B cell (primary cell): ENCODE measurements at regions of chr12 and their contacts with region 1.

Region 1: GRCh38 chr12:6062757-6063735 is 61.4 kb downstream of the VWF start:
- DNase-seq: peak; percentile 69
- ATAC-seq: peak; percentile 78
- H3K4me3 ChIP-seq: no peak overlapping the region
- H3K4me3 Mint-ChIP-seq: no peak overlapping the region
- H3K27ac ChIP-seq: no peak overlapping the region
- H3K27ac Mint-ChIP-seq: no peak overlapping the region
- H3K4me1 ChIP-seq: no peaks in the 10 kb centered on the region
- H3K4me1 Mint-ChIP-seq: no peaks in the 10 kb centered on the region
- H3K27me3 ChIP-seq: peaks cover 0 to 10% (median 1%) of the 10 kb centered on the region in 4 experiments
- H3K27me3 Mint-ChIP-seq: peaks cover 30% of the 10 kb centered on the region
- CTCF ChIP-seq: peak; percentile 83

Region 2: GRCh38 chr12:5861416-5861815 is 201.6 kb before region 1 on chr12:
- CTCF ChIA-PET with region 1: no interaction called
- POLR2A ChIA-PET with region 1: no interaction called
- intact Hi-C with region 1: no loop called
- DNase-seq: no peak
- ATAC-seq: no peak
- H3K4me3 ChIP-seq: no peak overlapping the region
- H3K4me3 Mint-ChIP-seq: no peak overlapping the region
- H3K27ac ChIP-seq: no peak overlapping the region
- H3K27ac Mint-ChIP-seq: no peak overlapping the region
- H3K4me1 ChIP-seq: no peaks in the 10 kb centered on the region
- H3K4me1 Mint-ChIP-seq: no peaks in the 10 kb centered on the region
- H3K27me3 ChIP-seq: peaks cover 0 to 2% (median 0%) of the 10 kb centered on the region in 4 experiments
- H3K27me3 Mint-ChIP-seq: peaks cover 9% of the 10 kb centered on the region
- CTCF ChIP-seq: no peak

Region 3: GRCh38 chr12:6285063-6285477 is 222.0 kb after region 1 on chr12:
- CTCF ChIA-PET with region 1: interaction called, 4 read pairs
- POLR2A ChIA-PET with region 1: no interaction called
- intact Hi-C with region 1: loop called (anchors 1 kb)
- DNase-seq: peak; percentile 78
- ATAC-seq: peak; percentile 85
- H3K4me3 ChIP-seq: no peak overlapping the region
- H3K4me3 Mint-ChIP-seq: no peak overlapping the region
- H3K27ac ChIP-seq: no peak overlapping the region
- H3K27ac Mint-ChIP-seq: no peak overlapping the region
- H3K4me1 ChIP-seq: peaks cover 0 to 5% of the 10 kb centered on the region in 2 donors
- H3K4me1 Mint-ChIP-seq: no peaks in the 10 kb centered on the region
- H3K27me3 ChIP-seq: peaks cover 0 to 11% (median 6%) of the 10 kb centered on the region in 4 experiments
- H3K27me3 Mint-ChIP-seq: peaks cover 51% of the 10 kb centered on the region
- CTCF ChIP-seq: peak; percentile 97